ENCODE measurements at regions of chr14 and their contacts with region 1.

Region 1: DNA sequence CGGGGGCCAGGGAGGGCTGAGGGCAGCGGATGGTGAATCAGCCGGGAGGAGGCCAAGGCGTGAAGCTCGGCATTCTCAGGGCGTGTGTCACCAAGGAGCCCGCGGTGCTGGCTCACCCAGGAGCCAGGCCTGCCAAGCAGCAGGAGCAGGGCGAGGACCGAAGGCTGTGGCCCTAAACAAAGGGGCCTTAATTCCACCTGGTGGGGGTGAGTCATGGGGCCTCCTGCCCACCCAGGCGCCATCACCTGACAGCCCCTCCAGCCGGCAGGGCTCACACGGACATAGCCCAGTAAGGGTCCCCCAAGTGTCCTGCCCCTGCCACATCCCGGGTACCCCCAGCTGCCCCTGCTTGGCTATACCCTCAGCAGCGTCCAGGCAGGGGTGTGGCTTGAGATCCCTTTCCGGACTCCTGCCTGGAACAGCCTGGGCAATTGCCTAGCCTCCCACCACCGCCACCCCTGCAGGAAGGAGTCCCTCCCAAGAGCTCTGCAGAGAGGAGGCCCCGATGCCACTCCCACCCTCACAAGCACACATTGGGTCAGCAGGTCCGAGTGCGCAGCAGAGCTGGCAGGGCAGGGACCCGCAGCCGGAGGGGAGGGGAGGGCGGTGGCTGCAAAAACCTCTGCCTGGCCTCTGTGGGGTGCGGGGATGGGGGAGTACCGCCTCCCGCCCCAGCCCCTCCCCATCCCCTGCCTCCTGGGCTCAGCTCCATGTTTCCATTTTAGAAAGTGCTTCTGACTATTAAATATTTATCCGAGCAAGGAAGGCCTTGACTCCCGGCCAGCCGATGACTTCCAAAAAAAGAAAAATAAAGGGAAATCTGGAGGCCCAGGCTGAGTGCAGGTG is 4.7 kb downstream of the AHNAK2 start:
- DNase-seq: peak; percentile 86 to 93
- H3K4me3 ChIP-seq: peak overlapping the region in 2 of 3 donors; percentile 21 to 36
- H3K27ac ChIP-seq: peak overlapping the region; percentile 95 to 97
- H3K4me1 ChIP-seq: peaks cover 25 to 63% of the 10 kb centered on the region in 2 donors
- H3K27me3 ChIP-seq: no peaks in the 10 kb centered on the region
- CTCF ChIP-seq: no peak
- POLR2A ChIP-seq: no peak

Region 2: DNA sequence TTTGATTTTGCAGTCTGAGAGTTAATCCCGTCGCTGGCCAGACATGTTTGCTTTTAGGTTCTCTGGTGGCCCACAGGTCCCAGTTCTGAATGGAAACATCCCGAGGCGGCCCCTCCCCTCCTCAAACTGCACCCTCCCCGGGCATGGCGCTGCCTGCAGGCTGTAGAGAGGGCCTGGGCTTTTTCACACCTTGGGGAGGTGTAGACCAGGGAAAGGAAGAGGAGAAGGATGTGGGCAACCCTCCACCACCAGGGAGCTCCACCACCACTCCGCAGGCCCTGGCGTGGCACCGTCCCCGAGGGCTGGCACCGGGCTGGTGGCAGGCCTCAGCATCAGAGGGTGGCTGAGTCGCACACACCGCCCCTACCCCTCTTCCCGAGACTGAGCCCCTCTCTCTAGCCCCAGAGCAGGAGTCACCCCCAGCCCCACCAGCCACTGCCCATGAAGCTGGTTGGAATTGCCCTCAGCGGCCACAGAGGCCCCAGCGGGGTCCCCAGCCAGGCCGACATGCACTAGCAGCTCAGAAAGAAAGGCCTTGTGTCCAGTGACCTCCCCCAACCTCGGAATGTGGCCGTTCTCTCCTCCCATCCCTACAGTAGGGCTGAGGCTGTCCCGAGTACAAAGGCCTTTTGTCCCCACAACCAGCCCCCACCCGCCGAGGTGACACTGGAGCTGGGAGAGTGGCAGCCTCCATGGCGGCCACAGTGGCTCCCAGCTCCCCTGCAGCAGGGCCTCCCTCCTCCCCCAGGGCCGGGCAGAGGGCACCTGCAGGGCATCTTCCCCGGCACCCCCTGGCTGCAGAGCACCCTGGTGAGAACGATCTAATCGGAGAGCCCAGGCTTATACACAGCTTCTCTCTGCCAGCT is 307.6 kb before region 1 on chr14:
- intact Hi-C with region 1: no loop called
- DNase-seq: peak in 1 of 2 donors; percentile 49
- H3K4me3 ChIP-seq: peak overlapping the region in 1 of 3 donors; percentile 25
- H3K27ac ChIP-seq: peak overlapping the region; percentile 60 to 87
- H3K4me1 ChIP-seq: peaks cover 0 to 7% of the 10 kb centered on the region in 2 donors
- H3K27me3 ChIP-seq: no peaks in the 10 kb centered on the region
- CTCF ChIP-seq: peak in 2 of 3 donors; percentile 15 to 56
- POLR2A ChIP-seq: no peak

Region 3: GRCh38 chr14:104932676-104933631 is 40.6 kb before region 1 on chr14:
- intact Hi-C with region 1: loop called (anchors 5 kb)
- DNase-seq: peak; percentile 68 to 85
- H3K4me3 ChIP-seq: peak overlapping the region; percentile 56 to 69 (median 64)
- H3K27ac ChIP-seq: peak overlapping the region; percentile 50 to 61
- H3K4me1 ChIP-seq: no peaks in the 10 kb centered on the region
- H3K27me3 ChIP-seq: no peaks in the 10 kb centered on the region
- CTCF ChIP-seq: peak; percentile 47 to 63 (median 51)
- POLR2A ChIP-seq: no peak

Region 4: GRCh38 chr14:104957146-104958113 is 16.1 kb before region 1 on chr14:
- intact Hi-C with region 1: no loop called
- DNase-seq: no peak
- H3K4me3 ChIP-seq: no peak overlapping the region
- H3K27ac ChIP-seq: no peak overlapping the region
- H3K4me1 ChIP-seq: no peaks in the 10 kb centered on the region
- H3K27me3 ChIP-seq: no peaks in the 10 kb centered on the region
- CTCF ChIP-seq: no peak
- POLR2A ChIP-seq: no peak

Region 5: DNA sequence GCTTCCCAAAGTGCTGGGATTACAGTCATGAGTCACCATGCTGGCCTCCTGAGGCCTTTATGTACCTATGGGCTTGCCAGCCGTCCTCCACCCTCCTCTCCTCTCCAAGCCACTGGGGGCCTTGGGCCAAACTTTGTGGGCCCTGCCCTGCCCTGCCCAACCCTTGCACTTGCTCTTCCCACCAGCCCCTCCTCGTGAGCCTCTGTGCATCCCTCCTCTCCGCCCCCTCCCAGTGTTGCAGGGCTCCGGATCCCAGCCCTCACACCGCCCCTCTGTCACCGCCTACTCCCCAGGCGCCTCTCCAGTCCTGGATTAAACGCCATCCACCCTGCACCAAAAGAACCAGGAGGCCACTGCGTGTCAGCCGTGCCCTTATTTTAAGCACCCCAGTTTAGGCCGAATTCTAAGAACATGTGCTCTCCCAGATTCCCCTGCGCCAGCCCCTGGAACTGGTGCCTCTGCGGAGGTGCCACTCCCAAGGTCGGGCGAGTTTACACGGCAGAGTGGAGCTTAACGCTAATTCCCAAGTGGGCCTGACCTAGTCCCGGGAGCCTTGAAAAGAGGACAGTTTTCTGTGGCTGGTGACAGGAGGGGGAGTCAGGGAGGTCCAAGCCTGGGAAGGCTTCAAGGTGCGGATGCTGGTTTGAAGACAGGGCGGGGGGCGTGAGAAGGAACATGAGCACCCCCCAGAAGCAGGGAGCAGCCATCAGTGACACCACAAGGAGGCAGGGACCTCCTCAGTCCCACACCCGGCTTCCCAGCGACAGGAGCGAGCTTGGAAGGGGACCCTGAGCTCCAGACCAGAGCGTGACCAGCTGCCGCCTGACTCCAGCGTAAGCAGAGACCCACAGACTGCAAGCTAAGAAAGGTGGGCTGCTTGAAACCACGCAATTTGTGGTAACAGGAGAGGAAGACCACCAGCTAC is 68.6 kb after region 1 on chr14:
- intact Hi-C with region 1: loop called (anchors 2 kb)
- DNase-seq: no peak
- H3K4me3 ChIP-seq: no peak overlapping the region
- H3K27ac ChIP-seq: no peak overlapping the region
- H3K4me1 ChIP-seq: no peaks in the 10 kb centered on the region
- H3K27me3 ChIP-seq: no peaks in the 10 kb centered on the region
- CTCF ChIP-seq: no peak
- POLR2A ChIP-seq: no peak